ENCODE measurements at regions of chr19 and their contacts with region 1.

Region 1: GRCh38 chr19:47296036-47296435 is 13.6 kb upstream of the C5AR1 start:
- DNase-seq: peak; percentile 70 to 71
- H3K4me3 ChIP-seq: no peak overlapping the region
- H3K27ac ChIP-seq: no peak overlapping the region
- H3K4me1 ChIP-seq: 0 out of 2 replicates have a peak, but pooled peaks cover 2% of the 10 kb centered on the region
- H3K27me3 ChIP-seq: no peaks in the 10 kb centered on the region
- CTCF ChIP-seq: peak; percentile 95

Region 2: GRCh38 chr19:47284324-47284899 is 11.6 kb before region 1 on chr19:
- CTCF ChIA-PET with region 1: interaction called, 15 read pairs
- POLR2A ChIA-PET with region 1: interaction called, 4 read pairs
- intact Hi-C with region 1: no loop called
- DNase-seq: peak; percentile 41 to 56
- H3K4me3 ChIP-seq: no peak overlapping the region
- H3K27ac ChIP-seq: no peak overlapping the region
- H3K4me1 ChIP-seq: peaks cover 29% of the 10 kb centered on the region
- H3K27me3 ChIP-seq: no peaks in the 10 kb centered on the region
- CTCF ChIP-seq: peak; percentile 96

Region 3: DNA sequence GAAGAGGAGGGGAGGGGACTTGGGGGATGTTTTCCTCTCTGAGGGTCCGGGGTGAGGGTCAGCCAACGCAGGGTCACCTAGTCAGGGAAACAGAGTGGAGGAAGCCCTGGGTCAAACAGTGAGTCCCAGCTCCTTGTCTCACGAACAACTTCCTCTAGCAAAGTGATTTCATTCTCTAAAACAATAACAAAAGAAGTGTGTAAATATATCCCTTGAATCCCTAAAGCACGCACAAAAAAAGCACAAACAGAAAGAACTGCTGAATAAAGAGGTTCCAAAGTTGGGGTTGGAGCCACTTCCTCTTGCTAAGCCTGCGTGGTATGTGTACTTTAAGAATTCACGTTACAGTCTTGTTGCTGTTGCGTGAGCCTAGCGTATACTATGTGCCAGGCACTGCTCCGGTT is 34.4 kb after region 1 on chr19:
- CTCF ChIA-PET with region 1: no interaction called
- POLR2A ChIA-PET with region 1: no interaction called
- intact Hi-C with region 1: no loop called
- DNase-seq: no peak
- H3K4me3 ChIP-seq: no peak overlapping the region
- H3K27ac ChIP-seq: no peak overlapping the region
- H3K4me1 ChIP-seq: no peaks in the 10 kb centered on the region
- H3K27me3 ChIP-seq: 0 out of 2 replicates have a peak, but pooled peaks cover 3% of the 10 kb centered on the region
- CTCF ChIP-seq: no peak

Region 4: GRCh38 chr19:47391510-47392223 is 95.6 kb after region 1 on chr19:
- CTCF ChIA-PET with region 1: no interaction called
- POLR2A ChIA-PET with region 1: no interaction called
- intact Hi-C with region 1: loop called (anchors 2 kb)
- DNase-seq: peak; percentile 49 to 73
- H3K4me3 ChIP-seq: no peak overlapping the region
- H3K27ac ChIP-seq: no peak overlapping the region
- H3K4me1 ChIP-seq: no peaks in the 10 kb centered on the region
- H3K27me3 ChIP-seq: peaks cover 2% of the 10 kb centered on the region; the same call in 1 of the 2 replicates
- CTCF ChIP-seq: peak; percentile 97

Region 5: DNA sequence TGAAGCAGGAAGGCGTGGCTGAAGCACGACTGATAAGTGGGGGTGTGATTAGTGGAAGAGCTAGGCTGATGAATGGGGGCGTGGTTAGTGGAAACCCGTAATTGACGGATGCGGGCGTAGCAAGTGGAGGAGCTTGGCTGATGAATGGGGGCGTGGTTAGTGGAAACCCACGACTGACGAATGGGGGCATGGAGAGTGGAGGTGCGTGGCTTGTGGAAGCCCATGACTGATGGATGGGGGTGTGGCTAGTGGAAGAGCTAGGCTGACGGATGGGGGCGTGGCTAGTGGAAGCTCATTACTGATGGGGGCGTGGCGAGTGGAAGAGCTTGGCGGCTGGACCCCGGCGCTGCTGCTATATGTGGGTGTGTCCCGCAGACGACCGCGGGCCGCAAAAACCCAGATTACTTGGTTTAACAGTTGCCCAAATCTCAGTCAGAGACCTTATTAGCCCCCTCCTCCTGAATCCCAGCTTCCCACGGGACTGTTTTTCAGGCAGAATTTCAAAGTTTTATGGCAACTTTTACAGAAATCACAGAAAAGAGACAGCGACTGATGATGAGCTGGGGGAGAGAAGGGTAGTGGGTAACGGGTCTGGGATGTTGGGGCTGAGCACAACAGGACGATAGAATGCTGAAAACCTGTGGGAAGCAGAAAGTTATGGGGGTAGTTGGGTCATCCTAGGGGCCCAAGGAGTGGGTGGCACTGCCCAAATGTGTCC is 132.3 kb after region 1 on chr19:
- CTCF ChIA-PET with region 1: interaction called, 4 read pairs
- POLR2A ChIA-PET with region 1: no interaction called
- intact Hi-C with region 1: loop called (anchors 1 kb)
- DNase-seq: peak; percentile 88 to 92
- H3K4me3 ChIP-seq: peak overlapping the region; percentile 33; the same call in 1 of the 2 replicates
- H3K27ac ChIP-seq: 0 out of 2 replicates have a peak overlapping the region, but pooled peaks have one; percentile 19
- H3K4me1 ChIP-seq: peaks cover 22% of the 10 kb centered on the region
- H3K27me3 ChIP-seq: peaks cover 18% of the 10 kb centered on the region
- CTCF ChIP-seq: no peak